ENCODE measurements at regions of chr10 and their contacts with region 1.

Region 1: DNA sequence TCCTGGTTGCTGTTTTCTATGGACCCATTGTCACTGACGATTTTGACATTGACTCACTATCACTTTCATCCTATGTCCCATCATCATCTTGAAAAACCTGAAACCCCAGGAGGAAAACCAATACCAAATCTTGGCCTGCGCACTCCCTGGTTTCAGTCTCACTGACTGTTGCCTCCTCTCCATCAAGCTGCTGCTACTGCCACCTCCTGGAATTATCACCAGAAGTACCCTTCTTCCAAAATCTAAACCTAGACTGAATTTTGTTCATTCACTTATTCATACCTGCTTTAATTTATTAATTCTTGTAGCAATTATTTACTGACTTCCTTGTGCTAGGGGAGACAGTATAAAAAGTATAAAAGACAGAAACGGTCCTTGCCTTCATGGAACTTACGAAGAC is 44.5 kb upstream of the ACBD5 start:
- DNase-seq: peak; percentile 78
- H3K4me3 Mint-ChIP-seq: no peak overlapping the region
- H3K27ac Mint-ChIP-seq: no peak overlapping the region
- H3K4me1 Mint-ChIP-seq: peaks cover 5% of the 10 kb centered on the region
- H3K27me3 Mint-ChIP-seq: peaks cover 13% of the 10 kb centered on the region

Region 2: DNA sequence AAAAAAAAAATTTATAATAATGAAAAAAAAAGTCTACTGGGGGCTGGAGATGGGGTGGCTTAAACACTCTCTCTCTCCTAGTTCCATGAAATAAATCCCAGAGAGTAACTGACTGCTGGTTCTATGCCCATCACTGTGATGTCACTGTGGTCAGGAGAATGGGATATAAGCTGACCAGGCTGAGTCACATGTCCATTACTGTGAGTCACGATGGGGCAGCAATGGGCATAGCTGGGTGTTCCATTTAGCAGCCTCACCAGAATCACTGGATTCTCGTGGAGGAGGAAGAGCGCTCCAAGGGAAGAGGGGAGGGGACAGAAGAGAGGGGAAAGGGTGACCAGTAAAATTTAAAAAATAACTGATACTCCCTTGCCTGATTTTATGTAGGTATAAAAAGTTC is 92.8 kb before region 1 on chr10:
- intact Hi-C with region 1: no loop called
- DNase-seq: no peak
- H3K4me3 Mint-ChIP-seq: no peak overlapping the region
- H3K27ac Mint-ChIP-seq: no peak overlapping the region
- H3K4me1 Mint-ChIP-seq: no peaks in the 10 kb centered on the region
- H3K27me3 Mint-ChIP-seq: no peaks in the 10 kb centered on the region

Region 3: DNA sequence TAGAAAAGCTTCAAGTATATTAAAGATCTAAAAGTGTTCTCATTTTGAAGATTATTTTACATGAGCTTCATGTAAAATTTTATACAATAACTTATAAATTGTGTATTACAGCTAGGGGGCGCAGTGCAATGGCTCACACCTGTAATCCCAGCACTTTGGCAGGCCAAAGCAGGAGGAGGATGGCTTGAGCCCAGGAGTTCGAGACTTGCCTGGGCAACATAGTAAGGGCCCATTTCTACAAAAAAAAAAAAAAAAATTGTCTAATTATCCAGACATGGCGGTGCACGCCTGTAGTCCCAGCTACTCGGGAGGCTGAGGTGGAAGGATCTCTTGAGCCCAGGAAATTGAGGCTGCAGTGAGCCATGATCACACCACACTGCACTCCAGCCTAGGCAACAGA is 61.1 kb before region 1 on chr10:
- intact Hi-C with region 1: loop called (anchors 1 kb)
- DNase-seq: peak; percentile 80
- H3K4me3 Mint-ChIP-seq: no peak overlapping the region
- H3K27ac Mint-ChIP-seq: no peak overlapping the region
- H3K4me1 Mint-ChIP-seq: peaks cover 7% of the 10 kb centered on the region
- H3K27me3 Mint-ChIP-seq: no peaks in the 10 kb centered on the region